ENCODE measurements at regions of chr2 and their contacts with region 1.

Region 1: DNA sequence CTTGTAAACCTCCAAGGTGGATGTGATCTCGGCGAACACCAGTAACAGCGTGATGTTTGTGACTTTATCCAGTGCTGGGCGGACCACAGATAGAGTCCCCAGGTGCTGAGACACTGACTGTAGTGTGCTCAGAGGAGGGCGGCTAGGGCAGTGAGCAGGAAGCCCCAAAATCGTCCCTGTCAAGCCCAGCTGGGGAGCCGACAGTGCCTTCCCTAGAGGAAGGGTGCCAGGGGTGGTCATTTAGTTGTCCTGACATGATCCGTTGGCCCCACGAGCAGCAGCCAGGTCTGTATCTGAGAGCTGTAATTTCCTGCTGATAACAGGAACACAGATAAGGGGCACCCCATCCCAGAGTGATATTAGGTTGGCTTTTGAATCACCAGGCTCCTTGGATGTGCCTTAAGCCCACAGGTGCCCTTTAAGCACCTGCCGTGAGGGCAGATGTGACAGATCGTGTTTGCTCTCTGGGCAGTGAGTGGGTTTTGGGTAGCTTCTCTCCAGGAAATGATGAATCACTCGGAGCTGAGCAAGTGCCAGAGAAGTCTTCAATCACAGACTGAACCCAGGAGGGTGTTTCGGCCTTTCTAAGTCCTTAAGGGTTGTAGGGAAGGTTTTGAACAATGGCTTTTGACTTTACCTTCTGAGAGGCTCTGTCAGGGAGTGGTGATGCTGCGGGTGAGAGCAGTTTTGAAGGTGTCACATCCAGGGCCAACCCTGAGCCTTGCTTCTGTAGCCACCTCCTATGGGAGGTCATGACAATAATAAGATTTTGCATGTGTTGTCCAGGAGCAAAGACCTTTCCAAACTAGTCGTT is 7.7 kb downstream of the LPIN1 start:
- DNase-seq: peak; percentile 89
- ATAC-seq: peak; percentile 73
- H3K4me3 Mint-ChIP-seq: peak overlapping the region; percentile 76
- H3K27ac Mint-ChIP-seq: peak overlapping the region; percentile 97
- H3K4me1 Mint-ChIP-seq: peaks cover 88% of the 10 kb centered on the region
- H3K27me3 Mint-ChIP-seq: no peaks in the 10 kb centered on the region
- CTCF ChIP-seq: no peak

Region 2: GRCh38 chr2:11187083-11187619 is 566.9 kb before region 1 on chr2:
- CTCF ChIA-PET with region 1: no interaction called
- POLR2A ChIA-PET with region 1: no interaction called
- intact Hi-C with region 1: no loop called
- DNase-seq: no peak
- ATAC-seq: no peak
- H3K4me3 Mint-ChIP-seq: no peak overlapping the region
- H3K27ac Mint-ChIP-seq: no peak overlapping the region
- H3K4me1 Mint-ChIP-seq: no peaks in the 10 kb centered on the region
- H3K27me3 Mint-ChIP-seq: no peaks in the 10 kb centered on the region
- CTCF ChIP-seq: no peak

Region 3: GRCh38 chr2:11743846-11744553 is 10.1 kb before region 1 on chr2:
- CTCF ChIA-PET with region 1: interaction called, 20 read pairs
- POLR2A ChIA-PET with region 1: interaction called, 19 read pairs
- intact Hi-C with region 1: no loop called
- DNase-seq: peak; percentile 83
- ATAC-seq: peak; percentile 62
- H3K4me3 Mint-ChIP-seq: peak overlapping the region; percentile 22
- H3K27ac Mint-ChIP-seq: peak overlapping the region; percentile 72
- H3K4me1 Mint-ChIP-seq: peaks cover 45% of the 10 kb centered on the region
- H3K27me3 Mint-ChIP-seq: no peaks in the 10 kb centered on the region
- CTCF ChIP-seq: no peak

Region 4: GRCh38 chr2:11767779-11768178 is 13.7 kb after region 1 on chr2:
- CTCF ChIA-PET with region 1: interaction called, 5 read pairs
- POLR2A ChIA-PET with region 1: interaction called, 10 read pairs
- intact Hi-C with region 1: no loop called
- DNase-seq: no peak
- ATAC-seq: no peak
- H3K4me3 Mint-ChIP-seq: no peak overlapping the region
- H3K27ac Mint-ChIP-seq: no peak overlapping the region
- H3K4me1 Mint-ChIP-seq: peaks cover 8% of the 10 kb centered on the region
- H3K27me3 Mint-ChIP-seq: no peaks in the 10 kb centered on the region
- CTCF ChIP-seq: no peak

Region 5: GRCh38 chr2:11778923-11779757 is 25.0 kb after region 1 on chr2:
- CTCF ChIA-PET with region 1: interaction called, 282 read pairs
- POLR2A ChIA-PET with region 1: interaction called, 14 read pairs
- intact Hi-C with region 1: loop called (anchors 1 kb)
- DNase-seq: peak; percentile 91
- ATAC-seq: peak; percentile 94
- H3K4me3 Mint-ChIP-seq: peak overlapping the region; percentile 42
- H3K27ac Mint-ChIP-seq: peak overlapping the region; percentile 56
- H3K4me1 Mint-ChIP-seq: peaks cover 42% of the 10 kb centered on the region
- H3K27me3 Mint-ChIP-seq: no peaks in the 10 kb centered on the region
- CTCF ChIP-seq: peak; percentile 95

Region 6: GRCh38 chr2:11784747-11785610 is 30.9 kb after region 1 on chr2:
- CTCF ChIA-PET with region 1: interaction called, 282 read pairs
- POLR2A ChIA-PET with region 1: no interaction called
- intact Hi-C with region 1: no loop called
- DNase-seq: peak; percentile 60
- ATAC-seq: peak; percentile 70
- H3K4me3 Mint-ChIP-seq: no peak overlapping the region
- H3K27ac Mint-ChIP-seq: no peak overlapping the region
- H3K4me1 Mint-ChIP-seq: no peaks in the 10 kb centered on the region
- H3K27me3 Mint-ChIP-seq: no peaks in the 10 kb centered on the region
- CTCF ChIP-seq: peak; percentile 98

Region 7: GRCh38 chr2:11899264-11899818 is 145.2 kb after region 1 on chr2:
- CTCF ChIA-PET with region 1: no interaction called
- POLR2A ChIA-PET with region 1: no interaction called
- intact Hi-C with region 1: no loop called
- DNase-seq: no peak
- ATAC-seq: no peak
- H3K4me3 Mint-ChIP-seq: no peak overlapping the region
- H3K27ac Mint-ChIP-seq: no peak overlapping the region
- H3K4me1 Mint-ChIP-seq: no peaks in the 10 kb centered on the region
- H3K27me3 Mint-ChIP-seq: no peaks in the 10 kb centered on the region
- CTCF ChIP-seq: no peak

Measured in activated CD8-positive, alpha-beta T cell treated with anti-CD3 and anti-CD28 coated beads for 36 hours (primary cell).